Activated CD4-positive, alpha-beta memory T cell treated with anti-CD3 and anti-CD28 coated beads for 36 hours (primary cell): ENCODE measurements at regions of chr20 and their contacts with region 1.

Region 1: GRCh38 chr20:59571551-59572314 is 32.6 kb upstream of the PHACTR3 start:
- DNase-seq: peak; percentile 66
- H3K4me3 Mint-ChIP-seq: peak overlapping the region; percentile 11
- H3K27ac Mint-ChIP-seq: no peak overlapping the region
- H3K4me1 Mint-ChIP-seq: no peaks in the 10 kb centered on the region
- H3K27me3 Mint-ChIP-seq: peaks cover 24% of the 10 kb centered on the region

Region 2: DNA sequence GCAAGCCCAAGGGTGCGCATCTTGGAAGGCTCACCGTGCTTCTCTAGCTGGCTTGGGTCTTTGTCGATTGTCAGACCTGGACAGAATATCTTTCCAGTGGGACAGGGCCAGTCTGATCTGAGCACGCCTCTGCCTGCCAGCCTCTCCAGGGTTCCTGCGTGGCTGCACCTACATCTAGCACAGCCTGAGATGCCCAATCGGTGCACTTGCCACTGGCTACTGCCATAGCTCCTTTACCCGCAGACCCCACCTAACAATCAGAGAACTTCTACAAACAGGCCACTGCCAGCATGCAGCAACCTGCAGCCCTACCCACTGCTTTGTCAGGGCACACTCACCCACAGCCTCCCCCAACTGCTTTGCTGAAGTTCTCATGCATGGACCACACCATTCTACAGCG is 24.1 kb before region 1 on chr20:
- CTCF ChIA-PET with region 1: interaction called, 11 read pairs
- POLR2A ChIA-PET with region 1: no interaction called
- intact Hi-C with region 1: no loop called
- DNase-seq: no peak
- H3K4me3 Mint-ChIP-seq: no peak overlapping the region
- H3K27ac Mint-ChIP-seq: no peak overlapping the region
- H3K4me1 Mint-ChIP-seq: no peaks in the 10 kb centered on the region
- H3K27me3 Mint-ChIP-seq: peaks cover 15% of the 10 kb centered on the region

Region 3: GRCh38 chr20:59560588-59561227 is 11.0 kb before region 1 on chr20:
- CTCF ChIA-PET with region 1: interaction called, 35 read pairs
- POLR2A ChIA-PET with region 1: no interaction called
- intact Hi-C with region 1: no loop called
- DNase-seq: no peak
- H3K4me3 Mint-ChIP-seq: no peak overlapping the region
- H3K27ac Mint-ChIP-seq: no peak overlapping the region
- H3K4me1 Mint-ChIP-seq: no peaks in the 10 kb centered on the region
- H3K27me3 Mint-ChIP-seq: peaks cover 5% of the 10 kb centered on the region

Region 4: GRCh38 chr20:59598625-59599310 is 27.0 kb after region 1 on chr20:
- CTCF ChIA-PET with region 1: interaction called, 10 read pairs
- POLR2A ChIA-PET with region 1: no interaction called
- intact Hi-C with region 1: no loop called
- DNase-seq: peak; percentile 48
- H3K4me3 Mint-ChIP-seq: no peak overlapping the region
- H3K27ac Mint-ChIP-seq: no peak overlapping the region
- H3K4me1 Mint-ChIP-seq: no peaks in the 10 kb centered on the region
- H3K27me3 Mint-ChIP-seq: peaks cover 41% of the 10 kb centered on the region

Region 5: DNA sequence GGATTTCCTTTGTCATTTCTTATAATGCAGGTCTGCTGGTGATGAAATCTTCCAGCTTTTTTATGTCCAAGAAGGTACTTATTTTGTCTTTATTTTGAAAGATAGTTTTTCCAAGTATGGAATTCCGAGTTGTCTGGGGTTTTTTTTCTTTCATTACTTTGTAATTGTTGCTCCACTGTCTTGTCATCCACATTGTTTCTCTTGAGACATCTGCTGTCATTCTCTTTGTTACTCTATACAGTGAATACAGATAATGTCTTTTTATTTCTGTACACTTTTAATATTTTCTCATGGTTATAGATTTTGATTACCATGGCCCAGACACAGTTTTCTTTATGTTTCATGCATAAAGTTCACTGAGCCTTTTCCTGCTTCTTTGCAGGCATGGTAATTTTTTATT is 228.6 kb after region 1 on chr20:
- CTCF ChIA-PET with region 1: no interaction called
- POLR2A ChIA-PET with region 1: no interaction called
- intact Hi-C with region 1: no loop called
- DNase-seq: no peak
- H3K4me3 Mint-ChIP-seq: no peak overlapping the region
- H3K27ac Mint-ChIP-seq: no peak overlapping the region
- H3K4me1 Mint-ChIP-seq: no peaks in the 10 kb centered on the region
- H3K27me3 Mint-ChIP-seq: peaks cover 10% of the 10 kb centered on the region